Activated CD8-positive, alpha-beta T cell treated with anti-CD3 and anti-CD28 coated beads, Interleukin-2, amount 10 ng/mL, durations not matched to agents 7 days and 5 days (primary cell): ENCODE measurements at regions of chr2 and their contacts with region 1.

Region 1: GRCh38 chr2:135741395-135742324 is at the start of gene UBXN4:
- DNase-seq: peak; percentile 97
- ATAC-seq: peak; percentile 94
- H3K4me3 Mint-ChIP-seq: peak within 1 kb of the TSS; percentile 97
- H3K27ac Mint-ChIP-seq: peak within 1 kb of the TSS; percentile 99
- H3K4me1 Mint-ChIP-seq: peaks cover 31% of the 10 kb centered on the region
- H3K27me3 Mint-ChIP-seq: no peaks in the 10 kb centered on the region
- total RNA-seq, gene UBXN4: 94.1 to 96.2 TPM

Region 2: GRCh38 chr2:135876066-135876711 is 134.5 kb after region 1 on chr2 and contains the start of gene MCM6:
- CTCF ChIA-PET with region 1: no interaction called
- POLR2A ChIA-PET with region 1: interaction called, 11 read pairs
- DNase-seq: peak; percentile 100
- ATAC-seq: peak; percentile 94
- H3K4me3 Mint-ChIP-seq: peak within 1 kb of the TSS; percentile 80
- H3K27ac Mint-ChIP-seq: peak within 1 kb of the TSS; percentile 97
- H3K4me1 Mint-ChIP-seq: peaks cover 47% of the 10 kb centered on the region
- H3K27me3 Mint-ChIP-seq: no peaks in the 10 kb centered on the region
- total RNA-seq, gene MCM6: 144 to 145 TPM